Naive thymus-derived CD4-positive, alpha-beta T cell (primary cell): ENCODE measurements at regions of chr5 and their contacts with region 1.

Region 1: GRCh38 chr5:151101151-151101550 is 20.3 kb upstream of the TNIP1 start:
- DNase-seq: no peak
- ATAC-seq: no peak
- H3K4me3 ChIP-seq: no peak overlapping the region
- H3K4me3 Mint-ChIP-seq: no peak overlapping the region
- H3K27ac ChIP-seq: peak overlapping the region; percentile 39
- H3K27ac Mint-ChIP-seq: peak overlapping the region in 7 of 9 donors; percentile 55 to 90 (median 78)
- H3K4me1 ChIP-seq: peaks cover 0 to 23% of the 10 kb centered on the region in 2 donors
- H3K4me1 Mint-ChIP-seq: peaks cover 31 to 55% (median 43%) of the 10 kb centered on the region in 7 donors
- H3K27me3 ChIP-seq: no peaks in the 10 kb centered on the region
- H3K27me3 Mint-ChIP-seq: no peaks in the 10 kb centered on the region

Region 2: GRCh38 chr5:151086905-151087360 is 14.2 kb before region 1 on chr5:
- CTCF ChIA-PET with region 1: no interaction called
- POLR2A ChIA-PET with region 1: interaction called, 8 read pairs
- intact Hi-C with region 1: loop called (anchors 1 to 2 kb)
- DNase-seq: peak in 8 of 9 donors; percentile 36 to 65 (median 44)
- ATAC-seq: peak; percentile 87
- H3K4me3 ChIP-seq: no peak overlapping the region
- H3K4me3 Mint-ChIP-seq: peak overlapping the region in 6 of 10 donors; percentile 0 to 84 (median 30)
- H3K27ac ChIP-seq: peak overlapping the region; percentile 39
- H3K27ac Mint-ChIP-seq: peak overlapping the region in 5 of 9 donors; percentile 5 to 72 (median 49)
- H3K4me1 ChIP-seq: peaks cover 20 to 47% of the 10 kb centered on the region in 2 donors
- H3K4me1 Mint-ChIP-seq: peaks cover 30 to 67% (median 53%) of the 10 kb centered on the region in 7 donors
- H3K27me3 ChIP-seq: no peaks in the 10 kb centered on the region
- H3K27me3 Mint-ChIP-seq: no peaks in the 10 kb centered on the region